T-cell (primary cell): ENCODE measurements at regions of chr7 and their contacts with region 1.

Region 1: DNA sequence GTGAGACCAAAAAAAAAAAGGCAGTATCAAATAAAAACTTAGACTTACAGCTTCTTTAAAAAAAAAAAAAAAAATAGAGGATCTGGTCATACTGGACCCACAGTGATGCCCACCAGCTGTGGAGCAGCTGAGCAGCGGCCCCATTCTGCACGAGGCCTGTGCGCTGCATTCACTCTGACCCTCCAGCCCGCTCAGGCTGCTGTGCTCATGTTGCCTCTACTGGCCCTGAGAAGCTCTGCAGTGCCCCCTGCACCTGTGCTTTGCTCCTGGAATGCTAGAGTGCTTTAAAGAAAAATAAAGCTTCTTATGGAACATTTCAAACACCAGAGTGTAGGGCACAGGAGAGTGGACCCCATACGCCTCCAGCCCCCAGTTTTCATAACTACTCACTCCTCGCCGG is 33.2 kb downstream of the TMEM120A start:
- DNase-seq: no peak
- ATAC-seq: no peak
- H3K4me3 ChIP-seq: no peak overlapping the region
- H3K4me3 Mint-ChIP-seq: no peak overlapping the region
- H3K27ac ChIP-seq: no peak overlapping the region
- H3K27ac Mint-ChIP-seq: no peak overlapping the region
- H3K4me1 ChIP-seq: no peaks in the 10 kb centered on the region
- H3K4me1 Mint-ChIP-seq: peaks cover 0 to 2% (median 0%) of the 10 kb centered on the region in 3 donors
- H3K27me3 ChIP-seq: no peaks in the 10 kb centered on the region
- H3K27me3 Mint-ChIP-seq: no peaks in the 10 kb centered on the region

Region 2: DNA sequence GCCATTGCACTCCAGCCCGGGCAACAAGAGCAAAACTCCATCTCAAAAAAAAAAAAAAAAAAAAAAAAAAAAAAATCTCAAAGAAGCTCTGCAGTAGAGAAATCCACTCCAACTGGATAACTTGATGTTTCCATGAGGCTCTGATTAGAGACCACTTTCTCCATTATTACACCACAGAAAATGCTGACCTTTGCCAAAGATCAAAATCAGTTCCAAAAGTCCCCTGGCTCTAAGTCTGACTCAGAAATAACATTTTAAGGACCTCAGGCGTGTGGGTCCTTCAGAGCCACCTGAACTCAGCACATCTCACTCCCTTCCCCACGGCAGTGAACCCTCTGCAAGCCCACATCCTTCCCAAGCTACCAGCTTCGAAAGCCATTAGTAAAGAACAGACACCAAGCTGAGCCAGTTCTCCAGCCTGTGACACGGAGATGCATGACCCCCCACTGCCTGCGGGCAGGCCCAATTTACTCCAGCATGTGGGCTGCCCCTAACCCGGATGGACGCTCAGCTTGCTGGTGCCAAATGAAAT is 47.0 kb after region 1 on chr7:
- CTCF ChIA-PET with region 1: no interaction called
- POLR2A ChIA-PET with region 1: no interaction called
- DNase-seq: peak in 3 of 35 experiments; percentile 12 to 51 (median 15)
- ATAC-seq: peak; percentile 23 to 57 (median 45)
- H3K4me3 ChIP-seq: no peak overlapping the region
- H3K4me3 Mint-ChIP-seq: peak overlapping the region in 2 of 3 donors; percentile 5 to 62
- H3K27ac ChIP-seq: no peak overlapping the region
- H3K27ac Mint-ChIP-seq: peak overlapping the region in 1 of 2 donors; percentile 37
- H3K4me1 ChIP-seq: peaks cover 7 to 26% of the 10 kb centered on the region in 2 experiments
- H3K4me1 Mint-ChIP-seq: peaks cover 25 to 35% (median 28%) of the 10 kb centered on the region in 3 donors
- H3K27me3 ChIP-seq: peaks cover 0 to 6% of the 10 kb centered on the region in 2 experiments
- H3K27me3 Mint-ChIP-seq: no peaks in the 10 kb centered on the region

Region 3: DNA sequence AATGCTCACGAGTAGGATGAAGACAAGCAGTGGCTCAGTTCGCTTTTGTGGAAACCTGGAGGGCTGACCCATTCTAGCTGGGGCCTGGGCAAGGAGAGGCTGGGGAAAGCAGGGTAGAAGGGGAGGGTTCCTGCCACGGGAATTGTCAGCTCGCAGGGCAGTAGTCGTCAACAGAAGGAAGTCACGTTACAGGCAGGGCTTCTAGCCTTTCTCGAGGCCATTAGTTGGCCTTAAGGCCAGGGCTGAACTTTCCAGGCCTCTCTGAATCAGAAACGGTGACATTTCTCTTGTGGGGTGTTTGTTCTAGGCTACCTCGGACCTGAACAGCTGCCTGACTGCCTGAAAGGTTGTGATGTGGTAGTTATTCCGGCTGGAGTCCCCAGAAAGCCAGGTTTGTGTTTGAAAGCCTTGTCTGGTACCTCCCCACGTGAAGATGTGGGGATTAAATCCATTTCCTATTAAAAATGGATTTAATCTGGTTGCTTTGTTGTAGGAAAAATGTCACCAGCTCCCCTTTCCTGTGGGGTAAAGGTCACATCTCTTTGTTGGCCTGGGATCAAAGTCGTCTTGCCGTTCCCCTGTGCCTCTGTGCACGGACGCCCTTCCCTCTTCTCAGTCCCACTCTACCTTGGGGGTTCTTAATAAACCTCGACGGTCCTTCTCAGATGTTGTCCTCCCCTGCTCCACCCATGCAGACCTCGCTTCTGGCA is 96.0 kb after region 1 on chr7:
- CTCF ChIA-PET with region 1: no interaction called
- POLR2A ChIA-PET with region 1: interaction called in 1 of 2 experiments, 10 read pairs
- DNase-seq: no peak
- ATAC-seq: no peak
- H3K4me3 ChIP-seq: no peak overlapping the region
- H3K4me3 Mint-ChIP-seq: no peak overlapping the region
- H3K27ac ChIP-seq: no peak overlapping the region
- H3K27ac Mint-ChIP-seq: peak overlapping the region in 1 of 2 donors; percentile 41
- H3K4me1 ChIP-seq: peaks cover 0 to 7% of the 10 kb centered on the region in 2 experiments
- H3K4me1 Mint-ChIP-seq: peaks cover 4 to 11% (median 7%) of the 10 kb centered on the region in 3 donors
- H3K27me3 ChIP-seq: no peaks in the 10 kb centered on the region
- H3K27me3 Mint-ChIP-seq: no peaks in the 10 kb centered on the region